HCT116 (cell line): ENCODE measurements at regions of chr10 and their contacts with region 1.

Region 1: DNA sequence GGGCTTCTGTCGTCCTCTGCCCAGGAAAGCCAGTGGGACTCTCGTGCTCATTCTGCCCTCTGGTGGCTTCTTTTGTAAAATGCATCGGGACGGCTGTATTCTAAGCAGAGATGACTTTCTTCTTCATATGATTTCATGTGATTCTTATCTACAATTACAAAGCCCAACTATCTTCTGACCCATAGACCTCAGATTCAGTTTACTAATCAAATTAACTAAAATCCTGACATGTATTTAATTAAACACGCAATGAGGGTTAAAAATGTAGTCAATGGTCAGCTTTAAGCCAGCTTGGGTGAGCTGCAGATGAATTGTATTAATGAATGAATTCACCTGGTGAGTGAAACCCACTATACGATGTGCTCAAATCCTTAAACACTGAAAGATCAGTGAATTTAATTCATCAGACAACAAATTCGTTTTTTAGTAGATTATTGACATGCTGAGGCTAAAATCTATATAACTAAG is 117.6 kb upstream of the FAM204A start:
- DNase-seq: peak; percentile 73
- ATAC-seq: peak; percentile 99
- H3K4me3 ChIP-seq: no peak overlapping the region
- H3K27ac ChIP-seq: no peak overlapping the region
- H3K4me1 ChIP-seq: peaks cover 0 to 6% of the 10 kb centered on the region in 2 experiments; a peak in 1 of 4 replicates
- H3K27me3 ChIP-seq: peaks cover 33% of the 10 kb centered on the region
- CTCF ChIP-seq: peak; percentile 86 to 93 (median 90)
- POLR2A ChIP-seq: no peak
- RAD21 ChIP-seq: peak; percentile 93

Region 2: DNA sequence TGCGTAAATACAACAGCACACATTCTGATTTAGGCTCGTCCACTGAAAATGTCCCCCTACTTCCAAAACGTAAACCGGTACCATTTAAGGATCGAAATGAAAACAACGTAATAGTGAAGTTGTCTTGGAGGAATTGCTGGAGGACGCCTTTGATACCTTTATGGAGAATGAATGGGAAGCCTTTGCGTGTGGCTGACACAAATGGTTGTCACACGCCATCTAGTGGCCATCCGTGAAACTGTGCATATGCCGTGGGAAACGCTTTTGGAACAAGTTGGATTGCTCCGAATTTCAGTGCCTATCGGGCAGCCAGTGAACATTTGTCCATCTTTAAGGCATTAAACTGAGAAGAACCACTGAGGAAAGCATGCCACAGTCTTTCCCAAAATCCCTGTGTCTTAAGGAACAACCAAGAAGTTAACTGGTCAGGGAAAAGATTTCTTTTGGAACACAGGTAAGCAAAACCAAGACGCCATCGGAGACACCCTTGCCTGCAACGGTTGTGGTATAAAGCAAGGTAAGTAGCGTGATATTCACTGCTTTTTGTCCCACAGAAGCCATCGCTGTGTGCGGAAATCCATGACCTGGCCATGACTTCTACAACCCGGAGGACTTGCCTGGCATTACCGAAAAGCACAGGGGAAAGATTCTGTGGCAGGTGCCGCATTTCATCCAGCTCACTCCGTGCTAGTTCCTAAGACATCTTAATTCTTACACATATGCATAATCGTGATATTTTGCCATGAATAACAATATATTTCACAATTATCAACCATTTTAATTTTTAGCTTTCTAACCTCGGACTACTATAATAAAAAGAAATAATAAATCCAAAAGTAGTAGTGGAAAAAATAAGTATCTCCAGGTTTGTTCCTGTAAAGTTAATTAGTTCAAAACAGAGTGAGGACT is 218.3 kb before region 1 on chr10:
- CTCF ChIA-PET with region 1: interaction called, 12 read pairs
- POLR2A ChIA-PET with region 1: no interaction called
- RAD21 ChIA-PET with region 1: interaction called in 1 of 2 experiments, 3 read pairs
- intact Hi-C with region 1: no loop called
- DNase-seq: peak; percentile 81
- ATAC-seq: peak; percentile 88
- H3K4me3 ChIP-seq: no peak overlapping the region
- H3K27ac ChIP-seq: no peak overlapping the region
- H3K4me1 ChIP-seq: no peaks in the 10 kb centered on the region
- H3K27me3 ChIP-seq: peaks cover 81% of the 10 kb centered on the region
- CTCF ChIP-seq: peak; percentile 92 to 99 (median 98)
- POLR2A ChIP-seq: no peak
- RAD21 ChIP-seq: peak; percentile 98

Region 3: DNA sequence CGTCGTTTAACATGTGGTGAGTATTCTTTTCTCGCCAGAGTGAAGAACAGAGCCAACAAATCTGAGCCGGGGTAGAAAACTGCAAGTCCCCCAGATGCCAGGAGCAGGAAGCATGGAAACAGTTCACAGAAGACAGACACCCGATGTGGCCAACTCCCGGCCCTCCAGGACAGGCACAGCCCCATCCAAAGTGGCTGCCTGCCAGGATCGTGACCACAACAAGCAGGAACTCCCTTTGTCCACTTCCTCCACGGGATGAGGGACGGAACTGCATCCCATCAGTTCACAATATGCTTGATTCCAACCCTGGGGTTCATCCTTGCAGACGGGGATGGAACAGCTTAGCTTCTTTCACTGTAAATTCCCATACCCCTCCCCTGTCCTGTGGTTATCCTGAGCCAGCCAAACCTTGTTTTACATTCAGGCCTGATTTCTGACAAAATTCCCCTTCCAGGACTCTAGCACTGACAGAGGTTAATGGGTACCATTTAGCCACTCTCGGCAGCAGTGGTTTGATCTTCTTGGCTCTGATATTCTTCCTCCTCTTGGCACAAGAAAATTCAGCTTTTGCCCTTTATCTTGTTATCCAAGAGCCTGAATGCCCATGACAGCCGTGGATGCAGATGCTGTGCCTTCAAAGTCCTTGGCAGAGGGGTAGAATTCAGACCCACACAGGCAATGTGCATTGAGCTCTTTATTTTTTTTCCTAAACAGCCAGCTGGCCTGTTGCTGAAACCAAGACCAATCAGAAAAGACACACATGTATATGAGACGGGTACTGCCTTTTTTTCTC is 12.1 kb before region 1 on chr10:
- CTCF ChIA-PET with region 1: interaction called, 55 read pairs
- POLR2A ChIA-PET with region 1: no interaction called
- RAD21 ChIA-PET with region 1: no interaction called
- intact Hi-C with region 1: no loop called
- DNase-seq: no peak
- ATAC-seq: peak; percentile 52
- H3K4me3 ChIP-seq: no peak overlapping the region
- H3K27ac ChIP-seq: no peak overlapping the region
- H3K4me1 ChIP-seq: no peaks in the 10 kb centered on the region
- H3K27me3 ChIP-seq: peaks cover 28% of the 10 kb centered on the region; the same call in 1 of the 2 replicates
- CTCF ChIP-seq: no peak
- POLR2A ChIP-seq: no peak
- RAD21 ChIP-seq: no peak

Region 4: DNA sequence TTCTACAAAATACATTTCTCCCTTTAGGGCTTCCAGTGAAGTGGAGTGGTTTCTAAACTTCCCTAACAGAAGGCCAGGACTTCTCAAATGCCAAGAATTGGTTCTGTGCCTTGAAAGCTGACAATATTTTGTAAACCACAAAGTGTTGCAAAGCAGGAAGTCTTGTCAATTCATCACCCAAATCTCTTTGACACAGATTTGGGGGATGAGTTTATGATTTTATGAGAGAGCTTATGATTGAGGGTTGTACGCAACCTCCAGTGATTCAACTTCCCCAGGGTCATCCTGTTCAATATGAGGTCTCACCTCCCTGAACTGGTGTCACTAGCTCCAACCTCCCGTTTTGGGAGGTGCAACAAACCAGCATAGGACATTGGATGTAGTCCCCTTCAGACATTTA is 52.0 kb after region 1 on chr10:
- CTCF ChIA-PET with region 1: interaction called, 10 read pairs
- POLR2A ChIA-PET with region 1: no interaction called
- RAD21 ChIA-PET with region 1: no interaction called
- intact Hi-C with region 1: no loop called
- DNase-seq: no peak
- ATAC-seq: no peak
- H3K4me3 ChIP-seq: no peak overlapping the region
- H3K27ac ChIP-seq: no peak overlapping the region
- H3K4me1 ChIP-seq: no peaks in the 10 kb centered on the region
- H3K27me3 ChIP-seq: no peaks in the 10 kb centered on the region
- CTCF ChIP-seq: no peak
- POLR2A ChIP-seq: no peak
- RAD21 ChIP-seq: no peak